Activated T-helper 1 cell treated with anti-CD3 and anti-CD28 coated beads, Interleukin-12 subunit alpha, Interleukin-12 subunit beta, Interleukin-2, Interleukin-4 antibody, amounts not matched to agents 30 ng/mL and 10 ng/mL and 1 ng/mL, durations not matched to agents 14 hours and 24 hours and 36 hours (primary cell): ENCODE measurements at regions of chr1 and their contacts with region 1.

Region 1: DNA sequence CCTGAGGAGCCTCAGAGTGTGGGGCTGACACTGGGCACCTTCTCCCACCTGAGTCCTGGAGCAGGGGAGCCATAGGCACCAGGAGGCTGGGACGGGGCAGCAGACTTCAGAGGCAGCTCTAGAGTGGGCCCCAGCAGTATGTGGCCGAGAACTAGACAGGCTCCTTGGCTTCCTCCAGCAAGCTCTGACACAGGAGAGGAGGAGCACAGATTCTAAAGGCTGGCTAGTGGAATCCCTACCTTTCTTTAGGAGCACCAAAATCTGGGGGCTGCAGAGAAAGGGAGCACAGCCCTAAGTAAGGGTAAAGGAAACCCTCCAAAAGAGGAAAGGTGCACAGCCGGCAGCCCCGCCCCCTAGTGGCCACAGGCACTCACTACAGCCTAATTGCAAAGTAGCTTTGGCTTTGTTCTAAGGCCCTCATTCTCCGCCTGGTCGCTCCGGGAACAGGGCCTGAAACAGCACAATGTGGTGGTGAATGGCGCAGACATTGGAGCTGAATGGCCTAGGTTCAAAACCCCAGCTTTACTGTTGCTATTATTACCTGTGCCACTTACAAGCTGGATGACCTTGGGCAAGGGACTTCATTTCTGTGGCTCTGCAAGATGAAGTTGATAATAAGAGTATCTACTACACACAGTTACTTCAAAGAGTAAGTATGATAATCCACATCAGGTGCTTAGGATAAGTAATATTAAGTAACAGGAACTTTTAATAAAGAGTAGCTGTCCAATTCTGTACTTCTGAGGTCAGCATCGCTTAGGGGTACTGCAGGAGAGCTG is 8.8 kb upstream of the GUCA2A start:
- DNase-seq: peak; percentile 35
- H3K4me3 Mint-ChIP-seq: no peak overlapping the region
- H3K27ac Mint-ChIP-seq: no peak overlapping the region
- H3K4me1 Mint-ChIP-seq: no peaks in the 10 kb centered on the region
- H3K27me3 Mint-ChIP-seq: no peaks in the 10 kb centered on the region

Region 2: GRCh38 chr1:41516168-41517061 is 656.9 kb before region 1 on chr1:
- intact Hi-C with region 1: loop called (anchors 1 kb)
- DNase-seq: peak; percentile 55
- H3K4me3 Mint-ChIP-seq: no peak overlapping the region
- H3K27ac Mint-ChIP-seq: no peak overlapping the region
- H3K4me1 Mint-ChIP-seq: peaks cover 6% of the 10 kb centered on the region
- H3K27me3 Mint-ChIP-seq: no peaks in the 10 kb centered on the region

Region 3: GRCh38 chr1:42146626-42147320 is 26.6 kb before region 1 on chr1:
- intact Hi-C with region 1: loop called (anchors 1 kb)
- DNase-seq: peak; percentile 56
- H3K4me3 Mint-ChIP-seq: no peak overlapping the region
- H3K27ac Mint-ChIP-seq: no peak overlapping the region
- H3K4me1 Mint-ChIP-seq: no peaks in the 10 kb centered on the region
- H3K27me3 Mint-ChIP-seq: no peaks in the 10 kb centered on the region

Region 4: DNA sequence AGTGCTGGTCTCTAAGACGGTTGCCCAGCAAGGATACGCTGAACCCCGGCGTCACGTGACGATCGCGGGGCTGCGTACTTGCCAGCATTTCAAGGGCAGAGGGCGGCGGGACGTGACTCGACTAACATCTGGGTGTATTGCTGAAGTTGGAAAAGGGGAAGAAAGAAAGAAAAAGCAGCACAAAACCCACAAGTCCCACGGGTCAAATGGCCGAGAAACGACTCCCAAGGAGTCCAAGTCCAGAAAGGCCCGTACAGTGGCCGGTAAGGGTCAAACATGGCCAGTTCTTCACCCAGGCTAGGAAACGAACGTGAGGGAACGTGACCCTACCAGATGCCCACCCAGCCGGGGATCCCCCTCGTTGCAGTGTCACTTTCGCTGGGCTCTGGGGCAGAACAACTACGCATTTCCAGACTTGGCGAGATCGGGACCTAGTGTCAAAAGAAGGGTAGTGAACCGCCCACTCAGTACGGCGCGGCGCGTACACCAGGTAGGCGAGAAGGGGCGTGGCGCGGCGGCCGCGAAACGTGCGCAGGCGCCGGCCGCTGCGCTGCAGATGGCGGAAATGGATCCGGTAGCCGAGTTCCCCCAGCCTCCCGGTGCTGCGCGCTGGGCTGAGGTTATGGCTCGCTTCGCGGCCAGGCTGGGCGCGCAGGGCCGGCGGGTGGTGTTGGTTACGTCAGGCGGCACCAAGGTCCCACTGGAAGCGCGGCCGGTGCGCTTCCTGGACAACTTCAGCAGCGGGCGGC is 282.8 kb after region 1 on chr1 and contains the starts of genes PPCS and ZMYND12:
- intact Hi-C with region 1: loop called (anchors 10 kb)
- DNase-seq: peak; percentile 87
- H3K4me3 Mint-ChIP-seq: peak within 1 kb of the TSS; percentile 95
- H3K27ac Mint-ChIP-seq: peak within 1 kb of the TSS; percentile 98
- H3K4me1 Mint-ChIP-seq: peaks cover 28% of the 10 kb centered on the region
- H3K27me3 Mint-ChIP-seq: no peaks in the 10 kb centered on the region
- total RNA-seq, gene PPCS: 40.1 and 48.0 TPM in 2 replicates
- total RNA-seq, gene ZMYND12: not detected in 2 replicates